ENCODE measurements at regions of chr2 and their contacts with region 1.

Region 1: DNA sequence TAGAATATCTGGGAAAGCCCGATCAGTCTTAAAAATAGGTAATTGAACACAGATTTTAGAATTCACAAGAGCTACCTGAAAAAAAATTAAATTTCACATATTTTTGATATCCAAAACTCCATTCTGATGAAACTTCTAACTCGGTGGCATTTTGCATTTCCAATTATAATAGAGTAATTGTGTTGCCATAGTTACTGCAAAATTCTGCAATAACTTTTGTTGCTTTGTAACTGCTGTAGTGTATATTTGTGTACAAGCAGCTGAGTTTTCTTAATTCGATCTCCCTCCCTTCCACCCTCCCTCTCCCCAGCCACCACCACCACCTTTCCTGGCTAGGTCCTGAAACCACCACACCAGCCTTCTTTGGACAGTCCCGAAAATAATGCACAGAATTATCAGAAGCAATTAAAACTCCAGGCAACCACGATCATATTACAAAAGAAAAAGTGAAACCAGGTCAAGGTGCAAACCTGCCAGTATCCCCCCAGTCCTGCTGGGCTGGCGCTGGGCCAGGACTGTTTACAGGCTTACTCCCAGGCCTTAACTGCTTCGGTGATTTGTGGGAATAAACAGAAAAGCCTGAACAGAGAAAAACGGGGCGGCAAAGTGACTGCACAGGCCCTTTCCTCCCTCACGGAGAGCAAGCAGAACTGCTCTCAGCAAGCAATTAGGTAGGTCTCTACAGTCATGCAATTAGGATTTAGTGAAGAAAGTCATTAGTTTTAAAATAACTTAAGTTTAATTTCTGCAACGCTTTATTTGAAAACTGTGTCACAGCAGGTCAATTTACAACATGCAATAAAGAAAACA is 1.5 kb downstream of the HDAC4 start:
- DNase-seq: peak; percentile 56
- ATAC-seq: no peak
- H3K4me3 Mint-ChIP-seq: peak overlapping the region; percentile 74
- H3K27ac Mint-ChIP-seq: peak overlapping the region; percentile 86
- H3K4me1 Mint-ChIP-seq: peaks cover 34% of the 10 kb centered on the region
- H3K27me3 Mint-ChIP-seq: no peaks in the 10 kb centered on the region
- CTCF ChIP-seq: no peak

Region 2: GRCh38 chr2:239164335-239164871 is 234.9 kb before region 1 on chr2:
- CTCF ChIA-PET with region 1: no interaction called
- POLR2A ChIA-PET with region 1: no interaction called
- intact Hi-C with region 1: no loop called
- DNase-seq: peak; percentile 50
- ATAC-seq: peak; percentile 80
- H3K4me3 Mint-ChIP-seq: no peak overlapping the region
- H3K27ac Mint-ChIP-seq: no peak overlapping the region
- H3K4me1 Mint-ChIP-seq: peaks cover 16% of the 10 kb centered on the region
- H3K27me3 Mint-ChIP-seq: no peaks in the 10 kb centered on the region
- CTCF ChIP-seq: no peak

Region 3: DNA sequence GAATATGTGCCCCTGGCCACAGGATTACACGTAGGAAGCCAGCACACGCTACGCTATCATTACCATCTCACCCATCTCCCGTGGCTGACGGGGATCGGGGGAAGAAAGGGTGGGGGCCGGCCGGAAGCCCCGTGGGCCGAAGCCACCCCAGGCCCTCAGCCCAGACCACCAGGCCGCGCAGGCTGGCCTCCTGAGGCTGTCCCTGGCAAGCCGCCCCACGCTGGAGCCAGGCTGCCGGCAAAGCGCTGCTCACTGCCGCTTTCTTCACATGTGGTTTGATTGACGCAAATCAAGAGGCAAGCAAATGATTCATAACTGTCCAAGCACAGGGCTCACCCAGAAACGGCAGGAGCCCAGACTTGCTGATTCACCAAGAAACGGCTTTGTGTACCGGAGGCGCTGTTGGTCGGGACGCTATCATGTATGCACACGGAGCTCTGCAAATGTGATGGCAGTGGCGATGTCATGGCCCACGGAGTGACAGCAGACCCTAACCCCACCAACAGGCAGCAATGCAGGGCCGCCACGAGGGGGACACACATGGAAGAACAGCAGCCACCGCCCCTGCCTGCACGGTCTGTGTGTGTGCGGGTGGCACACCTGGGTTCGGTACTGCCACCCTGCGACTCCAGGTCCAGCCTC is 124.2 kb before region 1 on chr2:
- CTCF ChIA-PET with region 1: interaction called, 5 read pairs
- POLR2A ChIA-PET with region 1: no interaction called
- intact Hi-C with region 1: loop called (anchors 5 kb)
- DNase-seq: peak; percentile 86
- ATAC-seq: peak; percentile 88
- H3K4me3 Mint-ChIP-seq: no peak overlapping the region
- H3K27ac Mint-ChIP-seq: peak overlapping the region; percentile 78
- H3K4me1 Mint-ChIP-seq: peaks cover 37% of the 10 kb centered on the region
- H3K27me3 Mint-ChIP-seq: peaks cover 14% of the 10 kb centered on the region
- CTCF ChIP-seq: no peak

Region 4: DNA sequence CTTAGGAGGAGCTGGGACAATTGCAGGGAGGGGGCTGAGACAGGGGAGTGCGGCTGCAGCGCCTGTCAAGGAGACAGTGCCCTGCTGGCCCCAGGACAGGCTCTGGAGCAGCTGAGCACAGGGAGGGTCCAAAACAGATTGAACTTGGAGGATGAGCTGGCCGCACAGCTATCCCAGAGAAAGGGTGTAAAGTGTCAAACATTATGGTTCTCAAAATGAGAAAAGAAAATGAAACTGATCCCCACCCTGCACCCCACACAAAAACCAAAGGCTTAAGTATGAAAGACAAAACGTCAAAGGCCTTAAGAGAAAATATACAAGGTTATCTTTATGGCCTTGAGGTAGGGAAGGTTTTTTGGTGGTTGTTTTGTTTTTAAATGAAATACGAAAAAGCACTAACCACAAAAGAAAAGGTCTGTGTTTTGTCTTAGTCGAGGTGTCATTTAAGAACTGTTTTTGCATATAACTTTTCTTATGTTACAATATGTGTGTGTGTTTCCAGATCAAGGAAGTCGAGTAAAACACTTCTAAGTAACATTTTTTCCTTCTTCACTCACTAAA is 110.3 kb before region 1 on chr2:
- CTCF ChIA-PET with region 1: interaction called, 4 read pairs
- POLR2A ChIA-PET with region 1: interaction called, 5 read pairs
- intact Hi-C with region 1: loop called (anchors 5 kb)
- DNase-seq: peak; percentile 77
- ATAC-seq: peak; percentile 58
- H3K4me3 Mint-ChIP-seq: peak overlapping the region; percentile 59
- H3K27ac Mint-ChIP-seq: peak overlapping the region; percentile 94
- H3K4me1 Mint-ChIP-seq: peaks cover 74% of the 10 kb centered on the region
- H3K27me3 Mint-ChIP-seq: peaks cover 1% of the 10 kb centered on the region
- CTCF ChIP-seq: no peak

Region 5: GRCh38 chr2:239421851-239422250 is 22.5 kb after region 1 on chr2:
- CTCF ChIA-PET with region 1: no interaction called
- POLR2A ChIA-PET with region 1: no interaction called
- intact Hi-C with region 1: no loop called
- DNase-seq: no peak
- ATAC-seq: no peak
- H3K4me3 Mint-ChIP-seq: no peak overlapping the region
- H3K27ac Mint-ChIP-seq: no peak overlapping the region
- H3K4me1 Mint-ChIP-seq: no peaks in the 10 kb centered on the region
- H3K27me3 Mint-ChIP-seq: peaks cover 7% of the 10 kb centered on the region
- CTCF ChIP-seq: no peak

Region 6: DNA sequence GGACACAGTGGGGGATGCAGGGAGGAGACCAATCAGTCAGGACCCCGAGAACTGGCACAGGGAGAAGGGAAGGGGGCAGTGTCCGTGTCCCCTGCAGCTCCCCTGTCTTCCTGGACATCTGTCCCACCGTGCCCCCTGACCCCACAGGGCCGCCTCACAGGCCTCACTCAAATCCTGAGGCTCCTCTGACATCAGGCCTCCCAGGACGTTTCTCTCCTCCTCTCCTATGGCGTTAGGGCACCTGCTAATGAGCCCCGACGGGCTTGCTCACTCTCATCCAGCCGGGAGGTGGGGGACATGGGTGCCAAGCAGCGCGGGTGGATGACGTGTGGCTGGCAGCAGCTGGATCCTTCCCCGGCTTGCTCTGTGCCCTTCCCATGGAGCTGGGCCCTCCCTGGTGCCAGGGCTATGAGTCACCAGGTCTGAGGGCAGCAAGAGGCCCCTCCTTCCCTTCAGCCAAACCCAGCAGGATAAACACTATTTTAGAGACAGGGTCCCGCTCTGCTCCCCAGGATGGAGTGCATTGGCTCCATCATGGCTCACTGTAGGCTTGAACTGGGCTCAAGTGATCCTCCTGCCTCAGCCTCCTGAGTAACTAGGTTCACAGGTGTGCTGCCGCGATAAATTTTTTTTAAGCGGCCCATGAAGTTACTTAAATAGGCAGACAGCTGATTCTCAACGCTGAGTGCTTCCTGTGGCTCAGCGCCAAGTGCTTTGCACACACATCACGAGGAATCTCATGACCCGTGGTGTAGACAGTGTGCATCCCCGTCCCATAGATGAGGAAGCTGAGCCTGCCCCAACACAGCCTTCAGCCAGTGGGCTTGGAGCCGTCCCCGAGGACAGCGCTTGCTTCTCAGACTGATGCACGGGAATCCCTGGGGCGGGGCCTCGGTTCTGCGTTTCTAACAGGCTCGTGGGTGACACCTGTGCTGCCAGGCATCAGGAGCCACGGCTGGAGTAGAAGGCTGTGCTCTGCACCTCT is 66.0 kb after region 1 on chr2:
- CTCF ChIA-PET with region 1: no interaction called
- POLR2A ChIA-PET with region 1: no interaction called
- intact Hi-C with region 1: no loop called
- DNase-seq: no peak
- ATAC-seq: no peak
- H3K4me3 Mint-ChIP-seq: no peak overlapping the region
- H3K27ac Mint-ChIP-seq: no peak overlapping the region
- H3K4me1 Mint-ChIP-seq: no peaks in the 10 kb centered on the region
- H3K27me3 Mint-ChIP-seq: no peaks in the 10 kb centered on the region
- CTCF ChIP-seq: no peak

Measured in activated CD8-positive, alpha-beta T cell treated with anti-CD3 and anti-CD28 coated beads for 36 hours (primary cell).